ENCODE measurements at regions of chr21 and their contacts with region 1.

Region 1: GRCh38 chr21:39313571-39314142 is at the start of gene BRWD1:
- DNase-seq: peak; percentile 89
- ATAC-seq: peak; percentile 84
- total RNA-seq, gene BRWD1: 24.5 to 32.0 TPM

Region 2: DNA sequence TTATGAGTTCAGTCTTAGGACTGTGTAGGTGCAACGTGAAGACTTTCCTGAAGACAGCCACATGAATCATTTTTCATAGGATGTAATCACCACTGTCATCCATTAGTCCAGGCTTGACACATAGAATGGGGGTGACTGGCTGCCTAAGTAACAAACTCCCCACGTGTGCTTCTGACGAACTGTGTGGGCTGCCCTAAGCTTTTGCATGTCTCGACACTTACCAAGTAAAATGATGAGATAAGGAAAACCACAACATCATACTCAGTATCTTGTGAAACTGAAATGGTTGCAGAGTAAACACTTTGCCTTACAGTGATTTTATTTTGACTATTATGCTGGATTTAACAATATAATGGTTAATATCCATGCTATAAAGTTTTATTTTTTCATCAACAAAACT is 834.9 kb before region 1 on chr21:
- intact Hi-C with region 1: no loop called
- DNase-seq: no peak
- ATAC-seq: peak in 1 of 2 donors; percentile 90

Region 3: DNA sequence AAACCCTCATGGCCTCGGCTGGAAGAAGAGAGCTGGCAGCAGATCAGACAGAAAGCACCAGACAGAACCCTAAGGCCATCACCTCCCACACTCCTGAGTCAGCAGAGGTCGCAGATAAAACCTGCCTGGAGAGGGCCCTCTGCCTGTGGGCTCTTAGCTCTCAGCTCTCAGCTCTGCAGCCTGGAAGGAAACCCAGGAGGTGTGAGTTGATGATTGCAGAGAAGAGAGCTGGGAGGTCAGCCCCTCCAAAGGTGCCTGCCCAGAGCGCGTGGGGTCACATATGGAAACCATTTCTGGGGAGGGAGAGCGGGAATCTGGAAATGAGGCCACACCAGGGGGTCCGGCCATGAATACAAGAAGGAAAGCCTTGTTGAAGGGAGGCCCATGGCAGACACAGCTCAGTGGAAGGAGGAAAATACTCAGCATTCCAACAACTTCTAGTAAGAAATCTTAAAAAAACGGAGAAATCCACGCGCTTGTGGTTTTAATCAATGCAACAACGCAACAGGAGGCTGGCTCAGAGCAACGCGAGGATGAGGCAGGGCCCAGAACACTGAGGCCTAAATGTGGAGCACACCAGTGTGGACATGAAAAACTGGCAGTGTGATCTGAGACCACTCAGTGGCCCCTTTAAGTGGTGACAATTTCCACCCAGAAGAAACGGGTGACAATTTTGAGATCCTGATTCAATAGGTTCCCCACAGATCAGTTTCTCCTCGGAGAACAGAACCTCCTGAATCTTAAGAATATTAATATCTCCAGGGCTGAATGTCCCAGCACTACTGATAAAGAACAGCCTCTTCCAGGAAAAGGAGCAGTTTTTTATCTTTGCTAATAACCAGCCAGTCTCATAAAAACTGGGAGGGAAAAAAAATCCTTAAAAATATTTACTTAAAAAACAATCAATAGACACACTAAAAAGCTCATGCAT is 176.1 kb before region 1 on chr21:
- intact Hi-C with region 1: no loop called
- DNase-seq: no peak
- ATAC-seq: peak; percentile 38 to 80

Region 4: GRCh38 chr21:39183237-39184007 is 130.2 kb before region 1 on chr21 and contains the start of gene PSMG1:
- intact Hi-C with region 1: no loop called
- DNase-seq: peak; percentile 97
- ATAC-seq: peak; percentile 98
- total RNA-seq, gene PSMG1: 21.3 to 30.6 TPM

Region 5: GRCh38 chr21:39336457-39337030 is 22.9 kb after region 1 on chr21:
- intact Hi-C with region 1: no loop called
- DNase-seq: no peak
- ATAC-seq: no peak

Region 6: DNA sequence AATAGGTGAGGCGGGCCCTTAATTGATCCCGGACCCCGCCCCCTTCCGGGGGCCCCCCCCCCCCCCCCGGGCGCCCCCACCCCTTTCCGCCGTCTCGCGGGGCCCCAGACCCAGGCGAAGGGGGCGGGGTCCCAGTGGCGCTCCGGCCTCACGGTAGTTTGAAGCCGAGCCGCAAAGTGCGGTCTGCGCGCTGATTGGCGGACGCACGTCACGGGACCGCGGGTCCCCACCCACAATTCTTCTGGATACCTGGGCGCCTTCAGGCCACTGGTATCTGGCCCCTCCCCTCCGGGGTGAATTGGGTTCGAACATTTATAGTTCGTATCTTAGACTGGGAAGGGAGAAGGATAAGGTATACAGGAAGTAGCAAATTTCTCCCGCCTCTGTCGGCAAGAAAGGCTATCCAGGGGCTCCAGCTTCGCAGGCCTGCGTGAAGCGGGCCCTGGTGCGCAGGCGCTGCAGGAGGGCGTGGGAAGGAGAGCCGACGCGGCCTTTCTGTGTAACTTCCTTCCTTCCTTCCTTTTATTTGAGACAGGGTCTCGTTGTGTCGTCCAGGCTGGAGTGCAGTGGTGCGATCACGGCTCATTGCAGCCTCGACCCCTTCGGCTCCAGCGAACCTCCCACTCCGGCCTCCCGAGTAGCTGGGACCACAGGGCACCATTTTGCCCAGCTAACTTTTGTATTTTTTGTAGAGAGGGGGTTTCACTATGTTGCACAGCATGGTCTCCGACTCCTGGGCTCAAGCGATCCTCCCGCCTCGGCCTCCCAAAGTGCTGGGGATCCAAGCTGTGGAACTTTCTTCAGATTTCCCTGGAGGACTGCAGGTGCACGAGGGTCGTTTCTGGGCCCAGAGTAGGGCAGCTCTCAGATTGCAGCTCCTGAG is 35.8 kb after region 1 on chr21:
- intact Hi-C with region 1: loop called in 1 of 2 experiments (anchors 5 kb)
- DNase-seq: peak; percentile 97
- ATAC-seq: peak; percentile 96 to 97

Region 7: GRCh38 chr21:39388038-39388810 is 74.6 kb after region 1 on chr21:
- intact Hi-C with region 1: loop called (anchors 2 to 10 kb)
- DNase-seq: peak; percentile 94
- ATAC-seq: peak; percentile 82 to 87

Region 8: DNA sequence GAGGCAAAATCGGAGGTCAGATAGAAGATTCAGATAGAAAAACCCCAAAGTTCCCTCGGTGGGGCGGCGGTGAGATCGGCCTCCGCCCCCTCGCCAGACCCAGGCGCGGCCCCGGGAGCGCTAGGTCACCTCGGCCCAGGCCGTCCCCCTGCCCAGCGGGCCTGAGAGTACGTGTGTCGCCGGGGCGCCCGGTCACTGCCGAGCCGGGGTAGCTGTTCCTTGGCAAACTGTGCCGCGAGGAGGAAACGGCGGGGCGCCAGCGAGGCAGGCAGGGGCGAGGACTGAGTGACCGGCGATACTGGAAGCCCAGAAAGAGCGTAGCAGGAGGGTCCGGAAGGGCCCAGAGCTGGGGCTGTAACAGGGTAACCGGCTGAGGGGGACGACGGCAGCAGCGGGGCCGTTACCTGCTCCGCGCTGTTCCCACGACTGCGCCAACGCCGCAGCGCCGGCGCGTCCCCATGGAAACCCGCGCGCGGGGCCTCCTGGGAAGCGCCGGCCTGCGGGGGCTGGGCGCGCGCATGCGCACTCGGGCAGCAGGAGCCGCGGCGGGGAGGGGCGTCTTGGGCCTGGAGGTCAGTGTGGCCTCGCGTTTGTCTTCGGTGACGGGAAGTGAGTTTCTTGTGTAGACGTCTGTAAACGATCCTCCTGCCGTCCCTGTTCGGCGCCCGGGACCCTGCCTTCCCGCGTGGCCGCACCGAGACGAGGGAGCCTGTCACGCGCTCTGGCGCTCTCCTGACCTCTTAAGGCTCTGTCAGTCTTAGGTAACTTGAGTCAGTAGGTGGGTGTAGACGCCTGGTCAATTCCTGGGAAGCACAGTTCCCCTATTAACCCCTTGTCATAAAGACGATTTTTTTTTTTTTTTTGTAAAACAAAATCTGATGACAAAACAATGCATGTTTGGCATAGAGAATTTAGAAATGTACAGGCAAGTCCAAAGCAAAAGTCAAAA is 131.9 kb after region 1 on chr21 and contains the start of gene LCA5L:
- intact Hi-C with region 1: loop called in 1 of 2 experiments (anchors 10 kb)
- DNase-seq: peak; percentile 92
- ATAC-seq: peak; percentile 94 to 95
- total RNA-seq, gene LCA5L: 0.82 to 0.84 TPM

Measured in left cardiac atrium (tissue), 4 donors.